ENCODE measurements at regions of chr1 and their contacts with region 1.

Region 1: DNA sequence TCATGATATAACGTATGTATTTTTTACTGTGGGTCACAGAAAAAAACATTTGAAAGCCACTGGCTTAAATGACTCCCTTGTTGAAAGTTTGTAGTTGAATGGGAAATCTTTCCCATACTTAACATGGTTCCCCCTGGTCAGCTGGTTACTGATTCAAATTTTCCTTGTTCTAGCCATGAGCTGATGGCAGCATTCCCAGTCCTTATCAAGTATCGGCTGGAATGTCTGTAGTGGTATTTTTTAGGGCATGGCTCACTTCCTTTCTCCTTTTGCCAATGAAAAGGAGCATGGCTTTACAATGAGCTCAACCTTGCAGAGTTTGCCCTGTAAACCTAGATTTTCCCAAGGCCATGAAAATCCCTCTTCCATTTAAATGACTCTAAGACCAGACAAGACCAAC is 55.7 kb downstream of the GIPC2 start:
- DNase-seq: no peak

Region 2: DNA sequence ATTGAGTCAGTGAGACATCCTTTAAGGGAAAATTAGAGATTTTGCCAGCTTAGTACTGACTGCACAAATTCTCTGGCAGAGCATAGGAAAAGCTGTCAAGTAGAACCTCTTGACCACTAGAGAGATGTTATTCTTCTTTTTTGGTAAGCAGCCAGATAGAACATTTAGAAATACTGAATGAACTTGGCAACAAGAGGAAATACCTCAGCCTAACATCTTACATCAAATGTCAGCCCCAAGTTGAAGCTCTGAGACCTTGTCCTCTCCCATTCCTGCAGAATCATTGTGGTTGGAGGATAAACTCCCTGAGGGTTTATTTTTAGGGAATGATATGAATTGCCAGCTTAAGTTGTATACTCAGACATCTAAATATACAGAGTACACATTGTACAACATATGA is 268.6 kb before region 1 on chr1:
- intact Hi-C with region 1: loop called (anchors 5 kb)
- DNase-seq: no peak

Region 3: DNA sequence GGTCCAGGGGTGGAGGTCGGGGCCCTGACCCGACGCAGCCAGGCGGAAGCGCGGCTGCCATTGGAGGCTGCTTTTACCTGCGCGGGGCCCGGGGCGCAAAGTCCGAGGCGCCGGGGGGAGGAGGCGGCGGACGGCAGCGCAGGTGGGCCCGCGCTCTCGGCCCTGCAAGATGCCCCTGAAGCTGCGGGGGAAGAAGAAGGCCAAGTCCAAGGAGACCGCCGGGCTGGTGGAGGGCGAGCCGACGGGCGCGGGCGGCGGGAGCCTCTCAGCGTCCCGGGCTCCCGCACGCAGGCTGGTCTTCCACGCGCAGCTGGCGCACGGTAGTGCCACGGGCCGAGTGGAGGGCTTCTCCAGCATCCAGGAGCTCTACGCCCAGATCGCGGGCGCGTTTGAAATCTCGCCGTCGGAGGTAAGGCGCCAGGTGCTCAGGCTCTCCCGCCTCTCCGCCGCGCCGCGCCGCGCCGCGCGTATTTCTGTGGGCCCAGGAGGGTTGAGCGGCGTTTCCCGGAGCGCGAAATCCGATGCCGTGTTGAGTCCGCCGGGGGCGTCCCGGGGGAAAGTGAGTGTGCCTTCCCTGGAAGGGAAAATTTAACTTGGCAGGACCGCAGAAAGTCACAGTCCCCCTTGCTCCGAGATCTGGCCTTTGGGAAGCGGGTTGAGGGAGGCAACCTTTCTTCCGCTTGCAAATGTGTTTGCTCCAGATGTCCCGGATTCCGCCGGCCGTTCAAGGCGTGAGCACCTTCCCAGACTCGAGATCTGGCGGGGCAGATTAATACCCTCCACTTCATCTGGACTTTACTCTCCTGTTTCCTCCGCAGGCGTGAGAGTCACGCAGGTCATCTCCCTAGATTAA is 55.4 kb before region 1 on chr1 and contains the start of gene GIPC2:
- intact Hi-C with region 1: loop called (anchors 2 kb)
- DNase-seq: no peak
- total RNA-seq, gene GIPC2: 4.0 TPM

Region 4: DNA sequence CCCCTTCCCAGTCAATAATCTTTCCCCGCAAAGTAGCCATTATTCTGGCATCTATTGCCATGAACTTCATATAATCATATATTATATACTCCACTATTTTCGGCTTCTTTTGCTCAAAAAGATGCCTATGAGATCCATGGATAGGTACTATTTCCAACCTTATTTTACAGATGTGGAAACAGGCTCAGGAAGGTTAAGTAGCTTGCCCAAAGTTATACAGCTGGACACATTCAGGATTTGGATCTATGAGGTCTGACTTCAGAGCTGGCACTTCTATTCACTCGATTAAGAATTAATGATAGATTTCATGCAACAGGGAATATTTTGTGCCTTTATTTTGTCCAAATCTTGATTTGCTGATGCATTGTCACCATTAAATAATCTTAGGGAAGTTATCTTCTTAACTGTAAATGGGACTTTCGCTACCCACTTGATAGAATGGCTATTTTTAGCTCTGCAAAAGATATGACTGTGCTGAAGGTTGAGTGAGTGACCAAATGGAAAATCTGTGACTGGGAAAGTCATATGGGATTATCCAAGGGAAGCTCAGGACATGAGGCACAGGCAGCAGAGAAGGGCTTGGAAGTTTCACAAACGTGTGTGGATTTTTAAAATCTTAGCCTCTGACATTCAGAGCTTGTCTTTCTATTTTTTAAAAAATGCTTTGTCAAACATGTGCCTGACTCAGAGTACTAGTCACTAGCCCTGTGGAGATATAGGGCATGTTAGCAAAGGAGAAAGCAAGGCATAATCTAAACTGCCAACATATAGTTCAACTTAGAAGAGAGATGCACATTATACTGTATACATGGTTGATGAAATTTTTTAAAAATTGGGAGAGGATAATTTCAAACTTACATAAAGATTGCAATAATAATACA is 19.3 kb before region 1 on chr1:
- intact Hi-C with region 1: loop called (anchors 2 kb)
- DNase-seq: no peak

Region 5: GRCh38 chr1:78254517-78254916 is 153.0 kb after region 1 on chr1:
- intact Hi-C with region 1: no loop called
- DNase-seq: no peak